OCI-LY7 (cell line): ENCODE measurements at regions of chr5 and their contacts with region 1.

Region 1: DNA sequence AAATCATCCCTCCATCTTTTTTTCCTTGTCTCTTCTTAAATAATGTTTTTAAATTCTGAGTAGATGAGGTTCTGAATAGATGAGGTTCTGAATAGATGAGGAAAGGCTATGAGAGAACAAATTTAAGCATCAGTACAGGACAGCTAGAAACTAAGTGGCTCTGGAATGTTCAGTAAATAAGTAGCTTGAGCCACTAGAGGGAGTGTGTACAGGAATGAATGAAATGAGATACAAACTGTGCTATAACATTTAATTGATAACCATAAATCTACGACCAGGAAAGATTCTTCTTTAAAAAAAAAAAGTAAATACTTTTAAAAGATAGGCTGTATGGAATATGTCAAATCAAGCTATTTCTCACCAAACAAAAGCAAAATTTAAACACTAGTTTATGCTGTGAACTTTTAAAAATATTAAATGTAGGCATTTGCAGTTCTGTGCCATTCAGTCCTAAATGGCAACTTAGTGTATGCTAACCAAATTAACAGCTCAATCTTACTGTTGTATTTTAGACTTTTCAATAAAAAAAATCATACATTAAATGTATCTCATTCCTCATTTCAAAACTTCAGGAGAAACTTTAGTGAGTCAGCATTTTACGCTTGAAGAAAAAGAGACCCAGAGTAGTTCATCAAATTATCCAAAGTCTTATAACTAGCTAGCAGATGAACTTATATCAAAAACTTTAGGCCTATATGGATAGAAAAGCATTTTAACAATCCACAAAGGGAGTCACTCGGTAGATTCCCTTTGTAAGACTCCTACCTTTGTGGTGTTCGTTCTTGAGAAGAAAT is 70.4 kb upstream of the SNX2 start:
- DNase-seq: peak; percentile 57
- H3K4me3 ChIP-seq: no peak overlapping the region
- H3K27ac ChIP-seq: no peak overlapping the region
- H3K4me1 ChIP-seq: peaks cover 19% of the 10 kb centered on the region
- CTCF ChIP-seq: peak; percentile 80

Region 2: DNA sequence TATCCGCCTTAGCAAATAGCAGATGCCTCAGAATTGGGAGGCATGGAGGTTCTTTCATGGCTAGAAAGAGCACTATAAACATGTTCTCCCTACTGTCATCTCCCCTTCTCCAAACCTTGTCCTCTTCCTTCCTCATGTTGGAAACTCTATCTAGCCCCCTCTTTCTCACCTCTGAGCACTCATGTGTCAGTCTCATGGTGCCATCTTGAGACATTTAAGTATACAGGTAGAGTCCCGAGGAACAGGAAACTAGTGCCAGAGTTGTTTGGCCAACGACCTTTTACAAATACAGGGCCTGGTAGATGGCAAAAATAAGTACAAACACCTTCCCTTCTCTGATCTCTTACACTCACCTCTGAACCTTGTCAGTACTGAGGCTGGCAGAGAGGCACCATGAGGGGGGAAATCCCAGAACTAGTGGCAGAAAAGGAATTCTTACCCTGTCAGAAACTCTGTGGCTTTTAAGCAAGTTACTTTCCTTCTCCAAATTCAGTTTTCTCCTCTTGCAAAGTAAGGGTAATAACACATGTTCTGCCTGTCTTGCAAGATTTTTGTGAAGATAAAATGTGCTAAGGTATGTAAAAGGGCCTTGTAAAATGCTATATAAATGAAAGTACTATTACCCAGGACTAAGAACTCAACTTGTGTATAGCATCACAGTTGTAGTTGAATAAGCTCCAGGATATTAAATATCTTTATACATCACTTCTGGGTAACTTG is 23.6 kb before region 1 on chr5:
- CTCF ChIA-PET with region 1: no interaction called
- POLR2A ChIA-PET with region 1: no interaction called
- intact Hi-C with region 1: no loop called
- DNase-seq: no peak
- H3K4me3 ChIP-seq: no peak overlapping the region
- H3K27ac ChIP-seq: no peak overlapping the region
- H3K4me1 ChIP-seq: no peaks in the 10 kb centered on the region
- CTCF ChIP-seq: no peak

Region 3: GRCh38 chr5:122999945-123000563 is 295.6 kb after region 1 on chr5:
- CTCF ChIA-PET with region 1: no interaction called
- POLR2A ChIA-PET with region 1: no interaction called
- intact Hi-C with region 1: loop called (anchors 5 kb)
- DNase-seq: peak; percentile 47
- H3K4me3 ChIP-seq: no peak overlapping the region
- H3K27ac ChIP-seq: no peak overlapping the region
- H3K4me1 ChIP-seq: no peaks in the 10 kb centered on the region
- CTCF ChIP-seq: peak; percentile 78